Common myeloid progenitor, CD34-positive (primary cell): ENCODE measurements at regions of chr3 and their contacts with region 1.

Region 1: DNA sequence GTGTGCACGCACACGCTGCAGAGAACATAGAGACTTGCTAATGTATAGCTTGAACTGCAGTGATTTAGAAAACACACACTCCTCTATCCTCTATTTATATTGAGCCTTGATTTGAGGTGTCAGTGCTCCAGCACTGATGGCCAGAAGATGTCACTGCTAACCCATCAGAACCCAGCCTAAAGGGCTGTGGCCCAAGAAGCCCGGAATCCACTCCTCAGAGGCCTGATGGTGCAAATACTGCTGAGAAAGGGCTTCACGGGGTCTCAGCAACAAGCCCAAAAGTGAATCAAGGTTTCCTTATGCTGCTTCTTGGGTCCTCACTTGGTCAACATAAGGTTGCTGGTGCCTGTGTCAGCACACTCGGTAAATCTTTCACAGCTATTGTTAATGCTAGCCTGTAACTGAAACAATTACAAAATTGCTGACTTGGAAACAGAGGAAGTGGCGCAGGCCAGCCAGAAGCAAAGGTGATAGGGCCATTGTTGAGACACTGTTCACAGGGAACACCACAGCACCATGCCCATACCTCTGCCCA is 60.3 kb downstream of the HEG1 start:
- DNase-seq: peak; percentile 74 to 89 (median 84)
- H3K4me3 ChIP-seq: peak overlapping the region in 2 of 7 experiments; percentile 12 to 56
- H3K27ac ChIP-seq: no peak overlapping the region
- H3K4me1 ChIP-seq: peaks cover 0 to 6% (median 2%) of the 10 kb centered on the region in 4 experiments
- H3K27me3 ChIP-seq: no peaks in the 10 kb centered on the region

Region 2: GRCh38 chr3:125437631-125438435 is 442.3 kb after region 1 on chr3:
- CTCF ChIA-PET with region 1: interaction called, 78 read pairs
- POLR2A ChIA-PET with region 1: no interaction called
- DNase-seq: peak; percentile 36 to 60 (median 42)
- H3K4me3 ChIP-seq: no peak overlapping the region
- H3K27ac ChIP-seq: no peak overlapping the region
- H3K4me1 ChIP-seq: peaks cover 0 to 12% (median 0%) of the 10 kb centered on the region in 4 experiments
- H3K27me3 ChIP-seq: no peaks in the 10 kb centered on the region

Region 3: DNA sequence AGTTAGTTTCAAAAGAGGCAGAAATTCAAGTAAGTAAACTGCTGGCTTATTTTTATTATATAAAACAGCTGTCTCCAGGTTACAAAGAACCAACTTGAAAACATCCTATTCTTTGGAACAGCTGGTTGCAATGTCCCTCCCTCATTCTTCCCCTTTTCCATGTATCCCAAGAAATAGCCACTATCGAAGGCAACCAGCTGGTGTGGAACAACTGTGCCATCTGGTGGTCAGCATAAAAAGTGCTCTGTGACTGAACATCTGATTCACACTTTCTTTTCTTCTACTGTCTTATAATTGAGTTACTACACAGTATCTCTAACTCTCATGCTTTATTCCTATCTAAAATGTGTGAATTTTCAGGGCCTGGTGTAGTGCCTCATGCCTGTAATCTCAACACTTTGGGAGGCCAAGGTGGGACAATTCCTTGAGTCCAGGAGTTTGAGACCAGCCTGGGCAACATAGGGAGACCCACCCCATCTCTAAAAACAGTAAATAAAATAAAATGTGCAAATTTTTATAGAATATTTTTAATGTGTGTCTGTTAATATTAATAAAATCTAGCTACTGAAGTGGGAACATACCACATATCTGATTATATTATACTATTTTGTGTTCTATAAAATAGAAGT is 590.2 kb after region 1 on chr3:
- CTCF ChIA-PET with region 1: interaction called, 34 read pairs
- POLR2A ChIA-PET with region 1: no interaction called
- DNase-seq: peak; percentile 32 to 54 (median 46)
- H3K4me3 ChIP-seq: no peak overlapping the region
- H3K27ac ChIP-seq: no peak overlapping the region
- H3K4me1 ChIP-seq: peaks cover 0 to 8% (median 3%) of the 10 kb centered on the region in 4 experiments
- H3K27me3 ChIP-seq: no peaks in the 10 kb centered on the region